ENCODE measurements at regions of chr12 and their contacts with region 1.

Region 1: GRCh38 chr12:102769319-102769916 is 147.6 kb downstream of the PAH start:
- DNase-seq: peak; percentile 16 to 51
- ATAC-seq: peak; percentile 53 to 84
- H3K4me3 ChIP-seq: no peak overlapping the region
- H3K27ac ChIP-seq: no peak overlapping the region
- H3K4me1 ChIP-seq: peaks cover 4 to 8% of the 10 kb centered on the region in 2 donors
- H3K27me3 ChIP-seq: no peaks in the 10 kb centered on the region
- CTCF ChIP-seq: peak in 4 of 5 experiments; percentile 45 to 57 (median 46)
- POLR2A ChIP-seq: no peak

Region 2: DNA sequence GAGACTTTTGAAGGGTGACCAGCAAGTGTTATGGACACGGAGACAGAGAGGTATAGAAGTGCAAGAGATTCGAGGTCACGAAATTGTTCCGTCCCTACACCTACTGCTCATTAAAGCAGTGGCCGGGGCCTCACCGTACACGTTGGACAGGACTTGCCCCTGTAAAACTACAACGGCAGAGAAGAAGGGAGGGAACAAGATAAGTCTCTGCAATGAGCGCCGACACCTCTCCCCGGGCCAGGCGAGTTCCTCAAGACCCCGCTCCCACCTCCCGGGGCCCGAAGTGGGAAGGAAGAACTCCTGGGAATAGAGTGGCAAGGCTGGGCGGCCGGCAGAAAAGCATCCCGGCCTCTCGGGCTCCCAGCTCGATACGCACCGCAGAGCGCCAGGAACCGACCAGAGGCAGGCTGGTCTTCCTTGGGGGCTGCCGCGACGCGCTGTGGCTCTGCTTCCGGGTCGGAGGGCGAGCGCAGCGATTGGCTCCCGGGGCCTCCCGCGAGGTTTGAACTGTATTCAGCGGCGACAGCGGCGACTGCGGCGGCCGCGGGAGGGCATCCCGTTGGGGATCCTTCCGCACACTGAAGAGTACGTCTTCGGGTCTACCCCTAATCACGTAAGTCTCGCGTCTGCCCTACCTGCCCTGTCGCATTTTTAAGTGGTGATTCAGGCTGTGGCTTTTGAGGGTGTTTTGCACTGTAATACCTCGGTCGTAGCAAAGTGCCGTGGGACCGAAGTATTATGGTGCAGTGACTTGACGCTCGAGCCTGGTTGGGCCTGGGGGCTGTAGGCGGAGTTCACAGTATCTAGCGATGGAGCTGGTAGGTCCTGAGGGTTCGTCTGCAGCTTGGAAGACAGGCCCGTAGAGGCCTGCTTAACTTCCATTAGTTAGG is 649.5 kb before region 1 on chr12 and contains the starts of genes NUP37 and PARPBP:
- in situ Hi-C with region 1: no loop called
- intact Hi-C with region 1: loop called (anchors 10 kb)
- DNase-seq: peak; percentile 78 to 81
- ATAC-seq: peak; percentile 96 to 97
- H3K4me3 ChIP-seq: peak within 1 kb of the TSS; percentile 74 to 98 (median 90)
- H3K27ac ChIP-seq: peak within 1 kb of the TSS; percentile 85 to 91 (median 88)
- H3K4me1 ChIP-seq: peaks cover 7 to 16% of the 10 kb centered on the region in 2 donors
- H3K27me3 ChIP-seq: no peaks in the 10 kb centered on the region
- CTCF ChIP-seq: peak in 1 of 5 experiments; percentile 35
- POLR2A ChIP-seq: peak; percentile 45 to 55
- total RNA-seq, gene NUP37: 11.6 to 26.6 (median 19.2) TPM
- total RNA-seq, gene PARPBP: 0.31 to 3.1 (median 0.89) TPM

Region 3: DNA sequence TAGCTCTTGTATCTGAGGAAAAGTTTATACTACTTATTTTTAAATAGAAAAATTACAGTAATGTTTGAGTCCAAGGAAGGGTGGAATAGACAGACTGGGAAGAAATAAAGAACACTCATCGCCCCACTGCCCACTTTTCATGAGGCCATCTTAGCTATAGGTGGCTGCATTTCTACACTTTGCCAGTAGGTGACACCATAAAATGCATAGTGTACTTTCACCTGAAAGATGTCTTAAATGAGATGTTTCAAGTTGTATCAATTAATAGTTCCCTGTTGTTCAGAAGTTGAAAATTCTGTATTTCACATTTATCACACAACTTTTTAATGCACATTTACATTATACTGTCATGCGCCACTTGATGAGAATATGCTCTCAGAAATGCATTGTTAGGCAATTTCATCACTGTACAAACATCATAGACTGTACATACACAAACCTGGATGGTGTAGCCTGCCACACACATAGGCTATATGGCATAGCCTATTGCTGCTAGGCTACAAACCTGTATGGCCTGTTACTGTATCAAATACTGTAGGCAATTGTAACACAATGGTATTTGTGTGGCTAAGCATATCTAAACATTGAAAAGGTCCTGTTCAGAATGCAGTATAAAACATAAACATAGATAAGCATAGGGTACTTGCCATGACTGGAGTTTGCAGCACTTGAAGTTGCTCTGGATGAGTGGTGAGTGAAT is 599.3 kb before region 1 on chr12:
- in situ Hi-C with region 1: no loop called
- intact Hi-C with region 1: loop called (anchors 2 kb)
- DNase-seq: no peak
- ATAC-seq: peak; percentile 58 to 70
- H3K4me3 ChIP-seq: no peak overlapping the region
- H3K27ac ChIP-seq: no peak overlapping the region
- H3K4me1 ChIP-seq: no peaks in the 10 kb centered on the region
- H3K27me3 ChIP-seq: no peaks in the 10 kb centered on the region
- CTCF ChIP-seq: peak; percentile 50 to 73 (median 61)
- POLR2A ChIP-seq: no peak

Region 4: DNA sequence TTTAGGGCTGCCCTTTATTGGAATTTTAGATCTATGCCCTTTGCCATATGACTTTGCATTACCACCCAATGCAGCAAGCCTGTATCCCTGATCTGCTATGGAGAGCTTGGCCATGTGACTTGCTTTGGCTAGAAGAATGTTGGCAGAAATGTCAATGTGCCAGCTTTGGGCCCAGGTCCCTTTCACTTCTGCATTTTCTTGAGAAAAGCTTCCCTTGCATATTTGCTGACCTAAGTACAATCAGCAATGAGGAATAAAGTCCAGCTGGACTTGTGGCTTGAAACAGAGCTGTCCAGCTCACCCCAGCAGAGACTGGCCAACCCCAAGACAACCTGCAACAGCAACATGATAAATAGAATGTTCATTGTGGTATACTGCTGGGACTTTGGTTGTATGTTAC is 11.7 kb after region 1 on chr12:
- in situ Hi-C with region 1: no loop called
- intact Hi-C with region 1: no loop called
- DNase-seq: peak in 1 of 2 donors; percentile 18
- ATAC-seq: peak in 1 of 2 donors; percentile 36
- H3K4me3 ChIP-seq: no peak overlapping the region
- H3K27ac ChIP-seq: no peak overlapping the region
- H3K4me1 ChIP-seq: no peaks in the 10 kb centered on the region
- H3K27me3 ChIP-seq: no peaks in the 10 kb centered on the region
- CTCF ChIP-seq: no peak
- POLR2A ChIP-seq: no peak

Measured in gastrocnemius medialis (tissue), 4 donors.